CD8-positive, alpha-beta T cell (primary cell): ENCODE measurements at regions of chr12 and their contacts with region 1.

Region 1: GRCh38 chr12:54368709-54369583 is 4.7 kb upstream of the GPR84 start:
- DNase-seq: peak; percentile 79 to 94 (median 88)
- ATAC-seq: peak; percentile 97
- H3K4me3 ChIP-seq: peak overlapping the region in 1 of 2 experiments; percentile 15
- H3K4me3 Mint-ChIP-seq: peak overlapping the region; percentile 60
- H3K27ac ChIP-seq: peak overlapping the region in 1 of 2 experiments; percentile 28
- H3K27ac Mint-ChIP-seq: no peak overlapping the region
- H3K4me1 ChIP-seq: peaks cover 30% of the 10 kb centered on the region
- H3K4me1 Mint-ChIP-seq: peaks cover 34% of the 10 kb centered on the region
- H3K27me3 ChIP-seq: no peaks in the 10 kb centered on the region
- H3K27me3 Mint-ChIP-seq: no peaks in the 10 kb centered on the region
- CTCF ChIP-seq: peak; percentile 80

Region 2: DNA sequence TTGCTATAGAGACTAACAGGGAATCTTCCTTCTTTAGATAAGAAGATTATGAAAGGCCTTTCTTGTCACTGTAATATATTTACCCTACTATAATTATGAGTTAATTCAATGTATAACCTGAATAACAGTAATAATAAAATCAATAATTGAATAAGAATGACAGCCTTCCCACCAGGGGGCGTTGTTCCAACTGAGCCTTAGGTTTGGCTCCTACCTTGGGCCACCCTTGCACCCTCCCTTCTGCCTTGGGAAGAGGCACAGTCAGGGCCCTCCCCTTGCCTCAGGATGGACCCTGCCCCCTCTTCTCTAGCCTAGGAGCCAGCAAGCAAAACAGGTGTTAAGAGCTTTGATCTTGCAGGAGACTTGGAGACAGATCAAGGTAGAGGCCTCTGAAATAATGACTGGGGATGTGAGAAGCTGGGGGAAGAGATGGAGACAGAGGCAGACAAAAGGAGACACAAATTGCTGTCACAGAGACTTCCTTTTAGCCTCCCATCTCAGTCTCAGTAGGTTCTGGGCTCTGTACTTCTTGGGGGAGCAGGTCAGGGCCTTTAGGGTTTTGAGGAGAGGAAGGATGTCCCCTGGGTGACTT is 577.1 kb before region 1 on chr12:
- CTCF ChIA-PET with region 1: no interaction called
- POLR2A ChIA-PET with region 1: no interaction called
- intact Hi-C with region 1: no loop called
- DNase-seq: peak in 8 of 9 experiments; percentile 1 to 53 (median 33)
- ATAC-seq: no peak
- H3K4me3 ChIP-seq: no peak overlapping the region
- H3K4me3 Mint-ChIP-seq: no peak overlapping the region
- H3K27ac ChIP-seq: no peak overlapping the region
- H3K27ac Mint-ChIP-seq: no peak overlapping the region
- H3K4me1 ChIP-seq: no peaks in the 10 kb centered on the region
- H3K4me1 Mint-ChIP-seq: no peaks in the 10 kb centered on the region
- H3K27me3 ChIP-seq: peaks cover 0 to 4% of the 10 kb centered on the region in 2 experiments
- H3K27me3 Mint-ChIP-seq: peaks cover 17% of the 10 kb centered on the region
- CTCF ChIP-seq: peak; percentile 54

Region 3: DNA sequence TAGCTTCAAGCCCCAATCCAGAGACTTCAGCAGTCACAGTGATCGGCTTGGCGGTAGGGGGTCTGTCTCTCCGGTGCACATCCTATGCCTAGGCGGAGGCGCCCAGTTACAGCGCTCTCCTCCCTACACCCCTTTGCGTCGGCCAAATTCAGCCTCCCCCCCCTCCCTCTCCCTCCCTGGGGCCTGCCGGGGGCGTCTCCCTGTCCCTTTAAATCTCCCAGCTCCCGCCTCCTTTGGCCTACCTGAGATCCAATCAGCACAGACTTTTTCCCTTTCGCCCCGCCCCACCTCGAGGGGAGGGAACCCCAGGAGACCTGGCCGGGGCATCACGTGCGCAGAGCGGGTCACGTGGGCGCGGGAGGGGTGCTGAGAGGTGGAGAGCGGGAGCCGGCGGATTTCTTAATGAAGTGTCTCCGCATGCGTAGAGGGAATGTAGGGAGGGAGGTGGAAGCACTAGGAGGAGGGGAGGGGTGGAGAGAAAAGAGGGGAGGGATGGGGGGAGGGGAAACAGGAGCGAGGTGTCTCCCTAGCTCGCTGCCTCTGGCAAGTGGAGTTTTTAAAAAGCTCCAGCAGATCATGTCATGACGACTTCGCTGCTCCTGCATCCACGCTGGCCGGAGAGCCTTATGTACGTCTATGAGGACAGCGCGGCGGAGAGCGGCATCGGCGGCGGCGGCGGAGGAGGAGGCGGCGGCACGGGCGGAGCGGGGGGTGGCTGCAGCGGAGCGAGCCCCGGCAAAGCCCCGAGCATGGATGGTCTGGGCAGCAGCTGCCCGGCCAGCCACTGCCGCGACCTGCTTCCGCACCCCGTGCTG is 430.4 kb before region 1 on chr12 and contains the start of gene HOXC13:
- CTCF ChIA-PET with region 1: no interaction called
- POLR2A ChIA-PET with region 1: no interaction called
- intact Hi-C with region 1: no loop called
- DNase-seq: peak in 3 of 9 experiments; percentile 27 to 46 (median 43)
- ATAC-seq: peak; percentile 38
- H3K4me3 ChIP-seq: no peak within 1 kb of the TSS
- H3K4me3 Mint-ChIP-seq: peak within 1 kb of the TSS; percentile 38
- H3K27ac ChIP-seq: no peak within 1 kb of the TSS
- H3K27ac Mint-ChIP-seq: no peak within 1 kb of the TSS
- H3K4me1 ChIP-seq: peaks cover 13% of the 10 kb centered on the region
- H3K4me1 Mint-ChIP-seq: peaks cover 22% of the 10 kb centered on the region
- H3K27me3 ChIP-seq: peaks cover 38 to 56% of the 10 kb centered on the region in 2 experiments
- H3K27me3 Mint-ChIP-seq: peaks cover 78% of the 10 kb centered on the region
- CTCF ChIP-seq: no peak
- total RNA-seq, gene HOXC13: not detected

Region 4: GRCh38 chr12:54201001-54201794 is 167.7 kb before region 1 on chr12:
- CTCF ChIA-PET with region 1: no interaction called
- POLR2A ChIA-PET with region 1: no interaction called
- intact Hi-C with region 1: no loop called
- DNase-seq: peak; percentile 35 to 78 (median 62)
- ATAC-seq: peak; percentile 98
- H3K4me3 ChIP-seq: no peak overlapping the region
- H3K4me3 Mint-ChIP-seq: no peak overlapping the region
- H3K27ac ChIP-seq: no peak overlapping the region
- H3K27ac Mint-ChIP-seq: no peak overlapping the region
- H3K4me1 ChIP-seq: no peaks in the 10 kb centered on the region
- H3K4me1 Mint-ChIP-seq: no peaks in the 10 kb centered on the region
- H3K27me3 ChIP-seq: peaks cover 10 to 24% of the 10 kb centered on the region in 2 experiments
- H3K27me3 Mint-ChIP-seq: peaks cover 70% of the 10 kb centered on the region
- CTCF ChIP-seq: peak; percentile 90

Region 5: DNA sequence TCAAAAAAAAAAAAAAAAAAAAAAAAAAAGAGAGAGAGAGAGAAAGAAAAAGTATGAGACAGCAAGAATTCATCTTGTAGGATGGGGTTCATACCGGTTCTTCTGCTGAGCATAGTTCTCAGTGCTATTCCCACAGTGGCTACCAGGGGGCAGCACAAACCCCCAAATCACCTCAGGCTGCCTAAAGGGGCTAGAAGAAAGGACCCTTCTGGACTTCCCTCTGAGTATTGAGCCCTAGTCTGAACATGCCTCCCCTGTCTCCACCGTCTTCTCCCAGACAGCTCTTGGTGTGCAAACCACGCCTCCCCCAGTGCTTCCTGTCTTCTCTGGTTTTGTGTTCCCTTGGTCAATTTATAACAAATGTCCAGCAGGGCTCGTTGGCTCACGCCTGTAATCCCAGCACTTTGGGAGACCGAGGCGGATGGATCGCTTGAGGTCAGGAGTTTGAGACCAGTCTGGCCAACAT is 148.8 kb before region 1 on chr12:
- CTCF ChIA-PET with region 1: interaction called, 9 read pairs
- POLR2A ChIA-PET with region 1: no interaction called
- intact Hi-C with region 1: loop called (anchors 1 kb)
- DNase-seq: peak; percentile 39 to 76 (median 62)
- ATAC-seq: peak; percentile 62
- H3K4me3 ChIP-seq: no peak overlapping the region
- H3K4me3 Mint-ChIP-seq: no peak overlapping the region
- H3K27ac ChIP-seq: no peak overlapping the region
- H3K27ac Mint-ChIP-seq: no peak overlapping the region
- H3K4me1 ChIP-seq: peaks cover 22% of the 10 kb centered on the region
- H3K4me1 Mint-ChIP-seq: peaks cover 26% of the 10 kb centered on the region
- H3K27me3 ChIP-seq: no peaks in the 10 kb centered on the region
- H3K27me3 Mint-ChIP-seq: peaks cover 8% of the 10 kb centered on the region
- CTCF ChIP-seq: peak; percentile 62

Region 6: DNA sequence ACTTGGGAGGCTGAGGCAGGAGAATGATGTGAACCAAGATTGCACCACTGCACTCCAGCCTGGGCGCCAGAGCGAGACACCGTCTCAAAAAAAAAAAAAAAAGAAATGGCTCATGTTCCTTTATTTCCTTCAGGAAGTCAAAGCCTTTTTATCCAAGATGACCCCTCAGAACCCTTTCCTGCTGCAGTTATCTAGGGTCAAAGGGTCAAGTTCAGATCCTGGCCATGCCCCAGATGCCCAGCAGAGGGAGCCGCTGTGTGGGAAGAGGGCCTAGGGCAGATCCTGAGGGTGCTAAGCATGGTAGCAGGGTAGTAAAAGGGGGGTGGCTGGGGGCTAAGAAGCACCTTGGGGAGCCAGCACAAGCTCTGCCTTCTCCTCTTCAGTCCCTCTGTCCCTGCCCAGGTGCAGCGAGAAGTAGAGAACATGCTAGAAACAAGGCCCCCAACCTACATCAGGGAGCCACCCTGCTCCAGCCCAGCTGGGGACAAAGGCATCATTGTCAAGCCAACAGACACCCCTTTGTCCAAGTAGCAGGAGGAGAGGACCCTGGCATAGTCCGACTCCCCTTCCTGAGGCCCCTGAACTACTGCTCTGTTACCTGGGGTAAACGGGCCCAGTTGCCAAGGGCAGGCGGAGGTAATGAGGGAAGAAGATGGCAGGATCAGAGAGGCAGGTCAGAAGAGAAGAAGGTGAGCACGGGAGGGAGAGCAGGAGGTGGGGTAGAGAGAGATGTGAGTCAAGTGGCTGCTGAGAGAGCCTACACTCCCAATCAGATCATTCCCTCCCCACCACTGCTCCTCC is 74.6 kb before region 1 on chr12:
- CTCF ChIA-PET with region 1: interaction called, 79 read pairs
- POLR2A ChIA-PET with region 1: no interaction called
- intact Hi-C with region 1: loop called (anchors 1 to 2 kb)
- DNase-seq: peak in 8 of 9 experiments; percentile 38 to 72 (median 56)
- ATAC-seq: peak; percentile 77
- H3K4me3 ChIP-seq: no peak overlapping the region
- H3K4me3 Mint-ChIP-seq: no peak overlapping the region
- H3K27ac ChIP-seq: no peak overlapping the region
- H3K27ac Mint-ChIP-seq: no peak overlapping the region
- H3K4me1 ChIP-seq: peaks cover 3% of the 10 kb centered on the region
- H3K4me1 Mint-ChIP-seq: peaks cover 7% of the 10 kb centered on the region
- H3K27me3 ChIP-seq: peaks cover 0 to 2% of the 10 kb centered on the region in 2 experiments
- H3K27me3 Mint-ChIP-seq: peaks cover 13% of the 10 kb centered on the region
- CTCF ChIP-seq: peak; percentile 53

Region 7: DNA sequence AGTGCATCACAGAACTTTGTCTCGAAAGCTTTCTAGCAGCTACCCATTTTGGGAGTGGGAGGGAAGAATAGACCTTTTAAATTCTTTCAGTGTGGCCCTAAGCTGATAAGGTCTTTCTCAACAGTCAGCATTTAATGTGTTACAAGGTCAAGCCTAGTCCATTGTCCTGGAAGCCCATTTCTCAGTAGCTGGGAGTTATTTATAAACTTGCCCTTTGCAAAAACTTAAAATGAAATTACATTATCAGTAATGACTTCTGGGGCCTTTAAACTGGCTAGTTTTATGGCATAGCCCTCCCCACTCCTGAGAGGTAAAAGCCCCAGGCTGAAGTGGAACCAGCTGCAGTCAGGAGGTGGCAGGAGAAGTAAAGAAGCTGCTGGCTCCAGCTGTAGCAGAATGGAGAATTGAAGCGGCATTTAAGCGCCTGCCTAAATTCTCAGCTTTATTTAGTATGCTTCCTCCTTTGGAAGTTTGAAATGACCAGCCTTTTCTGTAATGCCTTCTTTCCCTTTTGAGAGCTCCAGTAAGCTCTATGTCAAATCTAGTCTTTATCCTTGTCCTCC is 31.6 kb before region 1 on chr12:
- CTCF ChIA-PET with region 1: interaction called, 15 read pairs
- POLR2A ChIA-PET with region 1: no interaction called
- intact Hi-C with region 1: loop called (anchors 1 kb)
- DNase-seq: no peak
- ATAC-seq: no peak
- H3K4me3 ChIP-seq: no peak overlapping the region
- H3K4me3 Mint-ChIP-seq: no peak overlapping the region
- H3K27ac ChIP-seq: no peak overlapping the region
- H3K27ac Mint-ChIP-seq: no peak overlapping the region
- H3K4me1 ChIP-seq: no peaks in the 10 kb centered on the region
- H3K4me1 Mint-ChIP-seq: peaks cover 25% of the 10 kb centered on the region
- H3K27me3 ChIP-seq: no peaks in the 10 kb centered on the region
- H3K27me3 Mint-ChIP-seq: no peaks in the 10 kb centered on the region
- CTCF ChIP-seq: no peak

Region 8: GRCh38 chr12:54439521-54440255 is 70.7 kb after region 1 on chr12:
- CTCF ChIA-PET with region 1: interaction called, 16 read pairs
- POLR2A ChIA-PET with region 1: no interaction called
- intact Hi-C with region 1: no loop called
- DNase-seq: peak in 2 of 9 experiments; percentile 65 to 76
- ATAC-seq: peak; percentile 90
- H3K4me3 ChIP-seq: no peak overlapping the region
- H3K4me3 Mint-ChIP-seq: no peak overlapping the region
- H3K27ac ChIP-seq: no peak overlapping the region
- H3K27ac Mint-ChIP-seq: no peak overlapping the region
- H3K4me1 ChIP-seq: no peaks in the 10 kb centered on the region
- H3K4me1 Mint-ChIP-seq: peaks cover 9% of the 10 kb centered on the region
- H3K27me3 ChIP-seq: peaks cover 0 to 3% of the 10 kb centered on the region in 2 experiments
- H3K27me3 Mint-ChIP-seq: peaks cover 2% of the 10 kb centered on the region
- CTCF ChIP-seq: peak; percentile 82